ENCODE measurements at regions of chr15 and their contacts with region 1.

Region 1: GRCh38 chr15:41180206-41180789 is 50.3 kb downstream of the EXD1 start:
- DNase-seq: no peak
- H3K4me3 ChIP-seq: no peak overlapping the region
- H3K27ac ChIP-seq: no peak overlapping the region
- H3K27me3 ChIP-seq: no peaks in the 10 kb centered on the region
- CTCF ChIP-seq: no peak

Region 2: DNA sequence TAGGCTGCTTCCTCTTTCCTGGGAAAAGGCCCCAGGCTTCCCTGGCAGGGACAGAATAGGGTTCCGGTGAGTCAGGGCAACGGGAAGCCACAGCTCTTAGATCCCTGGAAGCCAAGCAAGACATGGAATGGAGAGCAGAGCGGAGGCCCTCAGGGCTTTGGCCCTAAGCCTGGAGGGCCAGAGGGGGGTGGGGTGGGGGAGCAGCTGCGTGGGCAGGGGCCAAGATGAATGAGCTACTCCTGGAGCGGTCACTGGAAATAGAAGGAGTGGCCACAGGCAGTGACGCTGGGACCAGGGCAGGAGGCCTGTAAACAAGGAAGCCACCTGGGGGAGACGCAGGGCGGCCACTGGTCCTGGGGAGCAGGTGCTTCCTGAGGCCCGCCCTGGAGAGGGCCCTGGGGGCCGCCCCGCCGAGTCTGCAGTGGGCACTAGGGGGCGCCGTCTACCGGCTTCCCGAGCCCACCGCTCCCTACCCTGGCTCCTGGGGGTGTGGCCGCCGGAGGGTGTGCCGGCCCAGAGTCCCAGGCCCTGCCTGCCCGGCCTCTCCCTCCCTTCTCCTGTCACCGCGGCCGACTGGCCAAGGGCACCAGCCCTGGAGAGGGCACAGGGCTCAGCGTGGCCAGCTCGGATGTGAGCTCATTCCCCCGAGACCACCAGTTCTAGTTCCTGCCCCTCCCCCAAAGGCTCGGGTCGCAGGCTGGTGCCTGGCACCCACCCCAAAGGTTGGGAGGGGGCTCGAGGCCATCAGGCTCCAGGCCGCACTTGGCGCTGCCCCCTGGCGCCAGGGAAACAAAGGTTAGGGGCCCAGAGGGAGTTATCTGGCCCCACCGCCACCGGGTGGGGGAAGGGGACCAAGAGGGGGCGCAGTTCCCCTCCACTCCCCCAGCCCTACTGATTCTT is 274.0 kb before region 1 on chr15:
- CTCF ChIA-PET with region 1: interaction called, 73 read pairs
- POLR2A ChIA-PET with region 1: no interaction called
- DNase-seq: peak; percentile 86
- H3K4me3 ChIP-seq: peak overlapping the region; percentile 48
- H3K27ac ChIP-seq: peak overlapping the region; percentile 94
- H3K27me3 ChIP-seq: no peaks in the 10 kb centered on the region
- CTCF ChIP-seq: peak; percentile 80

Region 3: GRCh38 chr15:41169781-41170180 is 10.5 kb before region 1 on chr15:
- CTCF ChIA-PET with region 1: interaction called, 6 read pairs
- POLR2A ChIA-PET with region 1: interaction called, 15 read pairs
- DNase-seq: no peak
- H3K4me3 ChIP-seq: no peak overlapping the region
- H3K27ac ChIP-seq: no peak overlapping the region
- H3K27me3 ChIP-seq: peaks cover 2% of the 10 kb centered on the region
- CTCF ChIP-seq: no peak